GM12878 (cell line): ENCODE measurements at regions of chr1 and their contacts with region 1.

Region 1: DNA sequence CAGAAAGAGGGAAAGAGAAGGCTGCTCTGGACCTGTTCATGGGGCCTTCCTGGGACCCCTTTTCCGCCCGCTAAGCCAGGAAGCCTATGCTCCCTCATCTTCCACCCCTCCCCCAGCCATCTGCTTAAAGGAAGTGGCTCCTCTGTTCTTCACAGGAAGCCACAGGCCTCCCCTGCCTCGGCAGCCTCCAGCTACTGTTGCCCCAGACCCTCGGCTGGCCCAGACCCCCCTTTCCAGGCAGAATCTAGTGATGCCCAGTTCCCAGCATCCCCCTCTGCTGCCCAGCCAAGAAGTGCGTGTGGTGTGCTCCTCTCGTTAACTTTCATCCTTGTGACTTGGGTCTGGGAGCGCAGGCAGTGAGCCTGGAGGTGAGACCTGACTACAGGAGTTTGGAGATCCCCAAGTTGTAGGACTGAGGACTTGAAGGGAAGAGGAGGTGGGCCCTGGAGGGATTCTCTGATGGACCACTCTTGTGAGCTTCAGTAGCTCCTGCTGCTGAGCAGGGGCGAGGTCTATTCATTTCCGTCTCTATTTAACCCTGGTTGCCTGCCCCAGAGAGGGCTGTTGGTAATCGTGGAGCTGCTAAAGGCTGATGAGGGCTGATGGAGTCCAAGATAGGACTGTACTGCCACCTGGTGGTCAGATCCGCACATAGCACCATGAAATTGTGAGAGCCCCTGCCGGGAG is 9.1 kb downstream of the IFI6 start:
- DNase-seq: peak; percentile 78
- ATAC-seq: peak; percentile 65
- H3K4me3 ChIP-seq: peak overlapping the region; percentile 3; the same call in 1 of the 2 replicates
- H3K27ac ChIP-seq: peak overlapping the region; percentile 90
- H3K4me1 ChIP-seq: peaks cover 43% of the 10 kb centered on the region
- H3K27me3 ChIP-seq: no peaks in the 10 kb centered on the region
- CTCF ChIP-seq: peak; percentile 83 to 85 (median 85)
- EP300 ChIP-seq: no peak
- POLR2A ChIP-seq: peak; percentile 73
- RAD21 ChIP-seq: peak; percentile 97

Region 2: GRCh38 chr1:26259578-26259977 is 1403.3 kb before region 1 on chr1:
- CTCF ChIA-PET with region 1: no interaction called
- POLR2A ChIA-PET with region 1: no interaction called
- RAD21 ChIA-PET with region 1: no interaction called
- SMC1A ChIA-PET with region 1: no interaction called
- in situ Hi-C with region 1: no loop called
- intact Hi-C with region 1: no loop called
- DNase-seq: no peak
- ATAC-seq: no peak
- H3K4me3 ChIP-seq: no peak overlapping the region
- H3K27ac ChIP-seq: no peak overlapping the region
- H3K4me1 ChIP-seq: no peaks in the 10 kb centered on the region
- H3K27me3 ChIP-seq: no peaks in the 10 kb centered on the region
- CTCF ChIP-seq: no peak
- EP300 ChIP-seq: no peak
- POLR2A ChIP-seq: no peak
- RAD21 ChIP-seq: no peak

Region 3: DNA sequence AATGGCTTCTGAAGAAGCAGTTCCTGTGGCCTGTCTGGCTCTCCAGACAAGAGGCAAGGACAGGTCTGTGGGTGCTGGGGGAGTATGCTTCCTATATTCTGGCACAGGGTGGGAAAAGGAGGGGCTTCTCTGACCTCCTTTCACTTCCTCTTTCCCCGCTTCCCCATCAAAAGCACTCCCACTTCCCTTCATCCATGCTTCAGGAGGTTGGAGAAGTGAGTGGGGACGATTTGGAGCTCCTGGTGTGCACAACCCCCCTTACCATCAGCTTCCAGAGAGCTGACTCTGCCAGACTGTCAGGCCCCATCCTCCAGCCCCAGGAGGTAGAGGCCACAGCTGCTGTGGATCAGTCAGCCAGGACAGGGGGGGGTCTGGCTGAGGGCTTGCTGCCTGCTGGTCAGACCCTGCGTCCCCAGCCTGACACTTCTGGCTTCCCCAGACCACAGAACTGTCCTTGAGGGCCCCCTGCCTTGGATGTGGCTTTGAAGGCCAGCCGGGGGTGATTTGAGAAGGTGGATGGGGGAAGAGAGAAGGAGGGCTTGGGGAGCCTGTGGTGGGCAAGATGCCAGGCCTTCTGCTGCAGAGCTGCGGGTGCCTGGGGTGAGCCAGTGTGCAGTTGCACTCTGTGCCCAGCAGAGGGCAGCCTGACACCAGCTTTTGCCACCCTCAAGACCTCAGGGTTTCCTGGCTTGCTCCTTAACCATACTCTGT is 362.4 kb before region 1 on chr1:
- CTCF ChIA-PET with region 1: interaction called, 4 read pairs
- POLR2A ChIA-PET with region 1: no interaction called
- RAD21 ChIA-PET with region 1: interaction called, 5 read pairs
- SMC1A ChIA-PET with region 1: no interaction called
- in situ Hi-C with region 1: loop called (anchors 5 kb)
- intact Hi-C with region 1: loop called (anchors 2 kb)
- DNase-seq: peak; percentile 32
- ATAC-seq: peak; percentile 96
- H3K4me3 ChIP-seq: no peak overlapping the region
- H3K27ac ChIP-seq: no peak overlapping the region; the same call in 1 of the 2 replicates
- H3K4me1 ChIP-seq: peaks cover 5% of the 10 kb centered on the region
- H3K27me3 ChIP-seq: no peaks in the 10 kb centered on the region
- CTCF ChIP-seq: peak; percentile 99; a peak in 5 of 6 replicates
- EP300 ChIP-seq: no peak
- POLR2A ChIP-seq: no peak
- RAD21 ChIP-seq: peak; percentile 92

Region 4: DNA sequence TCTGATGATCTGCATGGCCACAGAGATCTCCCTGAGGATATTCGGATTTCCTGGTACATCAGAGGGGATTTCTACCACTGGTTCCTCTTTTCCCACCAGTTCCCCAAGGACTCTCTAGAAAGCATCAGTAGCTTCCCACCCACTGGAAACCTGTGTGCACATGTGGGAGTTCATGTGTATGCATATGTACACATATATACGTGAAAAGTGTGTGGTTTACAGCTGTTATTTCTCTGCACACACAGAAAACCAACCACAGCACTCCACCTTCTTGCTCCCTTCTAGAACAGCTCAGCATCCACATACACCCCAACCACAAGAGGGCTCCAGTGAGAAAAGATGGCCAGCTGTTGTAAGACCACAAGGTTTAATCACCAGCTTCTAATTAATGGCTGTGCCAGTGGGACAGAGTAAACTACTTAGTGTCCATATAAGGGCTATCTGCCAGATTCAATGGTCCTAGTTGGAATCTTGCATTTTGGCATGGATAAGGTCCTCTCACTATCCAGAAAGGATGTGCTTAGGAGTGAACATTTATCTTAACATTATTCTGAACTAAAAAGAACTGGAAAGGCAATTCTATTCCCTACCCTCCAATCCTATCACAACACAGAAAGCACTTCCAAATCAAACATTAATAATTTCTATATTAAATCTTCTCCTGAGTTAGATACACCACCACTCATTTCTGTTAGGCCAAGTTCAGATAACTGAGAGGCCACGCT is 246.3 kb before region 1 on chr1:
- CTCF ChIA-PET with region 1: interaction called, 8 read pairs
- POLR2A ChIA-PET with region 1: interaction called, 3 read pairs
- RAD21 ChIA-PET with region 1: interaction called, 9 read pairs
- SMC1A ChIA-PET with region 1: interaction called, 5 read pairs
- in situ Hi-C with region 1: no loop called
- intact Hi-C with region 1: loop called (anchors 5 kb)
- DNase-seq: peak; percentile 70
- ATAC-seq: peak; percentile 73
- H3K4me3 ChIP-seq: no peak overlapping the region
- H3K27ac ChIP-seq: peak overlapping the region; percentile 74
- H3K4me1 ChIP-seq: peaks cover 36% of the 10 kb centered on the region
- H3K27me3 ChIP-seq: no peaks in the 10 kb centered on the region
- CTCF ChIP-seq: peak; percentile 74 to 82 (median 74)
- EP300 ChIP-seq: 0 out of 4 replicates have a peak, but pooled peaks of 1 of the 2 experiments have one; percentile 26
- POLR2A ChIP-seq: no peak
- RAD21 ChIP-seq: peak; percentile 87

Region 5: DNA sequence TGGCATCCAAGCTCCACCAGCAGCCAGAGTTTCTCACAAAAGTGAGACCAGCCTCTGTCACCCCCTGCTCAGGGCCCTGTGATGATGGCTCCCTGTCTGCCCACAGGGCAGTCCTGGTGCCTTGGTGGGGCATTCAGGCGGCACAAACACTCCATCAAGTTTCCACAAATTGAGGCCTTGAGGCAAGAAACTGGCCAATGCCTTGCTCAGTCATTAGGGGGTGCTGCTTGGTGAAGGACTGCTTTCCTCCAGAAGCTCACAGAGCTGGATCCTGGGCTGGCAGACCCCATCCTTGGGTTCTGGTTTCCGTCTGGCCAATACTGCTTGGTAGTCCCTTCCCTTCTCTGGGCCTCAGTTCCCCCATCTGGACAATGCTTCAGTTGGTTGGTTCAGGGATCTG is 46.4 kb before region 1 on chr1:
- CTCF ChIA-PET with region 1: interaction called, 327 read pairs
- POLR2A ChIA-PET with region 1: interaction called, 67 read pairs
- RAD21 ChIA-PET with region 1: interaction called, 268 read pairs
- SMC1A ChIA-PET with region 1: interaction called, 248 read pairs
- in situ Hi-C with region 1: no loop called
- intact Hi-C with region 1: no loop called
- DNase-seq: no peak
- ATAC-seq: no peak
- H3K4me3 ChIP-seq: no peak overlapping the region
- H3K27ac ChIP-seq: no peak overlapping the region
- H3K4me1 ChIP-seq: peaks cover 18% of the 10 kb centered on the region
- H3K27me3 ChIP-seq: no peaks in the 10 kb centered on the region
- CTCF ChIP-seq: peak; percentile 23 to 31 (median 29); a peak in 4 of 6 replicates
- EP300 ChIP-seq: no peak
- POLR2A ChIP-seq: peak; percentile 38; the same call in 1 of the 2 replicates
- RAD21 ChIP-seq: peak; percentile 10; the same call in 1 of the 2 replicates

Region 6: DNA sequence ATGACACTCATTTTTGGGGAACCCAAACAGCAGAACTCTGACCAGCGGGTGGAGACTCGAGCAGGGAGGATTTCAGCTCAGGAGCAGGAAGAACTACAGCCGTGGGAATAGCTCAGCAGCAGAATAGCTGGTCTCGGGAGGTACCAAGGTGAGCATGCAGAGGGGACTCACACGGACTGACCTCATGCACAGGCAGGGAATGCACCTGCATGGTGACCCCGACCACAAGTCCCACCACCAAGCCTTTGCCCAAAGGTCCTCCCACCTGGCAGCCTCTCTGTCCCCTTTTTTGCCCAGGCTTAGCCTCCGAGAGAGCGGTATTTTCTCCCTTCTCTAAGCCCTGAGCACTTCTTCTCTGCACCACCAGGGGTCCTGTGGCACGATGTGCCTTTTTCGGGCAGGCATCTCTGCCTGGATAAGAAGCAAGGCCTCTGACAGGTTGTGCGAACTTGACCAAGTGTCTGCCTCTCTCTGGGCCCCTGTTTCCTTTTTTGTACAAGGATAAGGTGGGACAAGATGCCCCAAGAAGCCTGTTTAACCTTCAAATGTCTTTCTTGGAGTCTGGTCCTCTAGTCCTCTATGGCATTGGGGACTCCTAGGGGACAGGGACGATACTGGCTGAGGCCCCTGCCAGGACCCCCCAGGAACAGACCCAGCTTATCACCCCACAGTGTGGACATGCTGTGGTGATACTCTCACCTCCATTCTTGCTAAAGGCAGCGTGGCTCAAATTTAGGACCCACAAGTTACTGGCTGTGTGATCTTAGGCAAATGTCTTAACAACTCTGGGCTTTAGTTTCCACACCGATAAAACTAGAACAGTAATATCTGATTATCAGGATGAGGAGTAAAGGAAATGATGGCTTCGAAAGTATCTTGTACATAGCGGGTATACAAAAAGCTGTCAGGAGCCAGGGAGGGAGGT is 18.9 kb before region 1 on chr1:
- CTCF ChIA-PET with region 1: interaction called, 43 read pairs
- POLR2A ChIA-PET with region 1: interaction called, 23 read pairs
- RAD21 ChIA-PET with region 1: interaction called, 25 read pairs
- SMC1A ChIA-PET with region 1: interaction called, 28 read pairs
- in situ Hi-C with region 1: no loop called
- intact Hi-C with region 1: loop called (anchors 1 kb)
- DNase-seq: no peak
- ATAC-seq: peak; percentile 99
- H3K4me3 ChIP-seq: no peak overlapping the region
- H3K27ac ChIP-seq: no peak overlapping the region
- H3K4me1 ChIP-seq: peaks cover 8% of the 10 kb centered on the region
- H3K27me3 ChIP-seq: no peaks in the 10 kb centered on the region
- CTCF ChIP-seq: peak; percentile 80 to 98 (median 94)
- EP300 ChIP-seq: no peak
- POLR2A ChIP-seq: no peak
- RAD21 ChIP-seq: peak; percentile 81

Region 7: GRCh38 chr1:27760426-27760825 is 97.6 kb after region 1 on chr1:
- CTCF ChIA-PET with region 1: no interaction called
- POLR2A ChIA-PET with region 1: interaction called, 11 read pairs
- RAD21 ChIA-PET with region 1: no interaction called
- SMC1A ChIA-PET with region 1: interaction called, 3 read pairs
- in situ Hi-C with region 1: no loop called
- intact Hi-C with region 1: no loop called
- DNase-seq: no peak
- ATAC-seq: no peak
- H3K4me3 ChIP-seq: no peak overlapping the region
- H3K27ac ChIP-seq: no peak overlapping the region
- H3K4me1 ChIP-seq: no peaks in the 10 kb centered on the region
- H3K27me3 ChIP-seq: no peaks in the 10 kb centered on the region
- CTCF ChIP-seq: peak in 1 of 3 experiments; percentile 8; a peak in 1 of 6 replicates
- EP300 ChIP-seq: no peak
- POLR2A ChIP-seq: no peak
- RAD21 ChIP-seq: no peak